MCF 10A (cell line): ENCODE measurements at regions of chr14 and their contacts with region 1.

Region 1: DNA sequence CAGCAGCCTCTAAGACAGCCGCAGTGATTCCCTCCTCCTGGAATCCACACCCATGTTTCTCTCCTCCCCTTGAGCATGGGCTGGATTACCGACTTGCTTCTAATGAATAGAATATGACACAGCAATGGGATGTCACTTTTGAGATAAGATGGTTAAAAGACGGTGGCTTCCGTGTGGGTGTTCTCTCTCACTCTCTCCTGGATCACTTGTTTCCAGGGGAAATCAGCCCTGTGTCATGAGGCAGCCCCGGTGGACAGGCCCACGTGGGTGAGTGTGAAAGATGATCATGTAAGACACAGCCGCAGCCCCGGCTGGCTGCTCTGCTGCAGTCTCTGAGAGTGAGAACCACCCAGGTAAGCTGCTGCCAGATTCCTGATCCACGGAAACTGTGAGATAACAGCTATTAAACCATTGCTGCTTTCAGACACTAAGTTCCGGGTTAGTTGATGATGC is 10.7 kb downstream of the MOAP1 start:
- DNase-seq: no peak
- H3K4me3 Mint-ChIP-seq: no peak overlapping the region
- H3K27ac Mint-ChIP-seq: no peak overlapping the region
- H3K4me1 Mint-ChIP-seq: no peaks in the 10 kb centered on the region
- H3K27me3 Mint-ChIP-seq: no peaks in the 10 kb centered on the region
- CTCF ChIP-seq: no peak

Region 2: DNA sequence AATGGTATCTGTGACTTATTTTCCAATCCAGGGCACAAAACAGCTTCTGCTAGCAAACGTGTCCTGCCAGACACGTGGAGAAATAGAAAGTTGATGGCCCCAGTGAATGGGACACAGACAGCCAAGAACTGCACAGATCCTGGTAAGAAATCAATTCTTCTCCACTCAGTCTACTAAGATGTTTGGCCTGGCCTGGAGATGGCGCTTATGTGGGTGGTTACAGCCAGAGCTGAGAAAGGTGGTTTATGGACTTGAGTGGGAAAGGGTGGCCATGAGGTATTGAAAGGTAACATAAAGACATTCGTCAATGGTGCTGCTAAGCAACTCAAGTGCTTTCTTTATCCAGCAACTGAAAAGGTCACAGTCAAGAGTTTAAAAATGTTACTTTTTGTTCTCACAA is 848.1 kb before region 1 on chr14:
- CTCF ChIA-PET with region 1: no interaction called
- POLR2A ChIA-PET with region 1: no interaction called
- intact Hi-C with region 1: no loop called
- DNase-seq: no peak
- H3K4me3 Mint-ChIP-seq: no peak overlapping the region
- H3K27ac Mint-ChIP-seq: no peak overlapping the region
- H3K4me1 Mint-ChIP-seq: no peaks in the 10 kb centered on the region
- H3K27me3 Mint-ChIP-seq: peaks cover 23% of the 10 kb centered on the region
- CTCF ChIP-seq: no peak

Region 3: GRCh38 chr14:92819011-92819597 is 354.9 kb before region 1 on chr14:
- CTCF ChIA-PET with region 1: no interaction called
- POLR2A ChIA-PET with region 1: no interaction called
- intact Hi-C with region 1: no loop called
- DNase-seq: no peak
- H3K4me3 Mint-ChIP-seq: no peak overlapping the region
- H3K27ac Mint-ChIP-seq: no peak overlapping the region
- H3K4me1 Mint-ChIP-seq: no peaks in the 10 kb centered on the region
- H3K27me3 Mint-ChIP-seq: no peaks in the 10 kb centered on the region
- CTCF ChIP-seq: no peak

Region 4: DNA sequence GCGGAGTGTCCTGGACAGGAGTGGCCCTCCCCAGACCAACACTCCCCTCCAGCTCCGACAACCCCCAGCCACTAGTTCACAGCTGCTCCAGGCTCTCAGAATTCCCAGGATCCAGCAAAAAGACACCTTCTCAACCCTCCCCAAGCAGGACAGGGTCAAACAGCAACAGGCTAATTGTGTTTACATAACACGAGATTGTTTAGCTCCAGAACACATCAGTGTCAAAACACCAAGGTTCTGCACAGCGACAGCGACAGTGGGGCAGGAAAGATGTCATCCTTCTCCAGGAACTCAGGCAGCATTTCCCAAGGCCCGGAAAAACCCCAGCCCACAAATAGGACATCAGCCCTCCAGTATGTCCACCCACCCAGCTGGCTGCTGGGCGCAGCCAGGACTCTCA is 74.8 kb before region 1 on chr14:
- CTCF ChIA-PET with region 1: no interaction called
- POLR2A ChIA-PET with region 1: no interaction called
- intact Hi-C with region 1: no loop called
- DNase-seq: no peak
- H3K4me3 Mint-ChIP-seq: no peak overlapping the region
- H3K27ac Mint-ChIP-seq: no peak overlapping the region
- H3K4me1 Mint-ChIP-seq: peaks cover 12% of the 10 kb centered on the region
- H3K27me3 Mint-ChIP-seq: no peaks in the 10 kb centered on the region
- CTCF ChIP-seq: no peak

Region 5: GRCh38 chr14:93160353-93160801 is 13.6 kb before region 1 on chr14:
- CTCF ChIA-PET with region 1: interaction called, 20 read pairs
- POLR2A ChIA-PET with region 1: no interaction called
- intact Hi-C with region 1: no loop called
- DNase-seq: peak; percentile 54
- H3K4me3 Mint-ChIP-seq: no peak overlapping the region
- H3K27ac Mint-ChIP-seq: no peak overlapping the region
- H3K4me1 Mint-ChIP-seq: no peaks in the 10 kb centered on the region
- H3K27me3 Mint-ChIP-seq: no peaks in the 10 kb centered on the region
- CTCF ChIP-seq: peak; percentile 63

Region 6: DNA sequence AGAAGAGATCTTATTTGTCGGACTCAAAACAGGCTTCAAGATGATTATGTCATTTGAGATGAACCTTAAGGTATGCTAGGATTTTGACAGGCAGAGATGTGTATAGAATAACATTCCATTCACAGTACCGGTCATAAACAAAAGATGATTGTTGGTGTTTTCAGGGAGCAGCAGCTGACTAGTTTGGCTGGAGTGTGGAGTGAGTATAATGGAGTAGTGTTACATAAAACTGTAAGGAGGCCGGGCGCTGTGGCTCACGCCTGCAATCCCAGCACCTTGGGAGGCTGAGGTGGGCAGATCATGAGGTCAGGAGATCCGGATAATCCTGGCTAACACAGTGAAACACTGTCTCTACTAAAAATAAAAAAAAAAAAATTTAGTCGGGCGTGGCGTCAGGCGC is 1095.2 kb after region 1 on chr14:
- CTCF ChIA-PET with region 1: no interaction called
- POLR2A ChIA-PET with region 1: no interaction called
- intact Hi-C with region 1: no loop called
- DNase-seq: no peak
- H3K4me3 Mint-ChIP-seq: no peak overlapping the region
- H3K27ac Mint-ChIP-seq: no peak overlapping the region
- H3K4me1 Mint-ChIP-seq: no peaks in the 10 kb centered on the region
- H3K27me3 Mint-ChIP-seq: no peaks in the 10 kb centered on the region
- CTCF ChIP-seq: no peak